ENCODE measurements at regions of chr19 and their contacts with region 1.

Region 1: DNA sequence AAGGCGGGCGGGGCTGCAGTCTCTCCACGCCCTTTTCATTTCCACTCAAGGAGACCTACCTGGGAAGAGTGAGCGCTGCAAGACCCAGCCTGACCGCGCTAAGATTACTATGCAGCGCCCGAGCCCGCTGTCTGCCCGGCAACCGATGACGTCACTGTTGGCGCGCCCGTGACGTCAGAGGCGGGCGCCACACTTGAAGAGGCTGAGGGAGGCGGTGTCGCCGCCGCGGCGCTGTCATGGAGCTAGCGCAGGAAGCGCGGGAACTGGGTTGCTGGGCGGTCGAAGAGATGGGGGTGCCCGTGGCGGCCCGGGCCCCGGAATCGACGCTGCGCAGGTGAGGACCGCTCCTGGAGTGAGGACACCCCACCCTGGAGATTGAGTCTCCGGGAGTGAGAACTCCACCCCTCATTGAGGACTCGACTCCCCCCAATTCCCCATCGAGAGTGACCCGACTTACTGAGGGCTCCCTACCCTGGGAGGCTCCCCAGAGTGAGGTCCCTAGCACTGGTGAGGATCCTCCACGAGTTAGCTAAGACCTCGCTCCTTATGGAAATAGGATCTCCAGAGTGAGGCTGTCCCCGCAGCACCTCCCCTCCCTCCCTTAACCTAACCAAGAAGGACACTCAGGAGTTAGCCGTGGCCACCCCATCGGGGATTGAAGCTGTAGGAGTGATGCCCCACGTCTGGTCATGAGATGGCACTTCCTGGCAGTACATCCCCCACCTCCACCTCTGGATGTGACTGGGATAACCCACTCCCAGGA is at the start of gene HAUS5:
- DNase-seq: peak; percentile 94 to 98
- ATAC-seq: peak; percentile 98
- H3K4me3 ChIP-seq: peak within 1 kb of the TSS; percentile 20 to 66
- H3K27ac ChIP-seq: no peak within 1 kb of the TSS
- H3K4me1 ChIP-seq: no peaks in the 10 kb centered on the region
- H3K27me3 ChIP-seq: no peaks in the 10 kb centered on the region
- total RNA-seq, gene HAUS5: 5.3 to 10.5 TPM

Region 2: DNA sequence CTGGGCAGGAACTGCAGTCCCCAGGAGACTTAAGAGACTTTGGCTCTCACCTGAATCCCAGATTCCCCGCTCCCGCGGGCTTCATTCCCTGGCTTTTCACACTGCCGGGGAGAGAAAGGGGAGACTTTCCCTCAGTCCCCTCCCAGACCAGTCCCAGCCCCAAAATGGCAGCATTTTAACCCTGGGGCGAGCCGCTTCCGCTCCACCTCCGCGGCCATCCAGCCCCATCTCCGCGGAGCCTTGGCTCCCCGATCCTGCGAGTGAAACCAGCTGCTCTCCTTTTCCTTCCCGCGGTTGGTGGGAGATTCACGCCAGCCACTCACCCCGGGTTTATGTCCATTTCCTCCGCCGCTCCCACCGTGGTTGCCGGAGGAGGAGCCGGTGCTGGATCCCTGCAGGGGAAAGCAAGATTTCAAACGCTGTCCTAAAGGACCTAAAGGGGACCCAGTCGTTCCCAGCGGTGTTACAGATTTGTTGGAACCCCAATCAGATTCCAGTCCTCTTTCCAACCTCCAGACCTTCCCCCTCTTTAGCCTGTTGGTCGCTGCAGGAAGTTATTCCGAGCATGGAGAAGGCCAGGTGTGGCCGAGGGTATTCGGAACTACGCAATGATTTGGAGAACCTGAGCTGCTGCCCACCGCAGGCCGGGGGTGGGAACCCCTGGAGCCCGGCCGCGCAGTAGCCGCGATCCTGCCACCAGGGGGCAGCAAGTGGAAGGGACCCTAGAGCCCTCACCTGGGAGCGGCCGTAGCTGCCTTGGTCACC is 102.7 kb before region 1 on chr19:
- intact Hi-C with region 1: loop called in 1 of 2 experiments (anchors 5 kb)
- DNase-seq: peak; percentile 84 to 94
- ATAC-seq: peak; percentile 85
- H3K4me3 ChIP-seq: peak overlapping the region; percentile 32 to 37
- H3K27ac ChIP-seq: peak overlapping the region in 1 of 2 donors; percentile 49
- H3K4me1 ChIP-seq: no peaks in the 10 kb centered on the region
- H3K27me3 ChIP-seq: no peaks in the 10 kb centered on the region

Region 3: DNA sequence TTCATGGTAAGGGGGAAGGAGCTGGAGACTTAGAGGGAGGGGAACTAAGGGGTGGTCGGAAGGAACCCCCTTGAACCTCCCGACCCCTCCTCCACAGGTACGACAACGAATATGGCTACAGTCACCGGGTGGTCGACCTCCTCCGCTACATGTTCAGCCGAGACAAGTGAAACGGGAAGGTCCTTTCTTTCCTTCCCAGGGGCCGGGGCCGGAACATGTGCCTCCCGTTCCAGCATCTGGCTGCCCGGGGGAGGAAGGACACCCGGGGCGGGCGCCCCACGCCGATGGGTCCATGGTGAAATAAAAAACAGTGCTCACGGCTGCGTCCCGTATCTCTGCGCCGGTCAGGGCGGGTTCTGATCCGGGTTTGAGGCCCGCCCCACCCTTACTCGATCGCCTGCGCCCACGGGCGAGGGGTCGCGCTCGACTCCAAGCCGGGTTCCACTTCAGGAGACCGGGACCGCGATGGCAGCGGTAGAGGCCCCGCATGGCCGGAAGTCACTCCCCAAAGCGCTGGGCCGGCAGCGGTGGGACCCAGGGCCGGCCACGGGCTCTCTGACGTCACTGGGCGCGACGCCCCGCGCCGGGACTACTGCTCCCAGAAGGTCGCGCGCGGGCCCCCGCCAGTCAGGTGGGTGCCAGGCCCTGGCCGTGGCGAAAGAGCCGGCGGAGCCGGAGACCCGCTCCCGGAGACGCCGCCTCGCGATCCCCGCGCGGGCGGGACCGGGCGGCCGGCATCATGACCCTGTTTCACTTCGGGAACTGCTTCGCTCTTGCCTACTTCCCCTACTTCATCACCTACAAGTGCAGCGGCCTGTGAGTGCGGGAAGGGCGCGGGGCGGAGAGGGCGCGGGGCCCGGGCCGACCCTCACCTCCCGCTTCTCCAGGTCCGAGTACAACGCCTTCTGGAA is 67.5 kb before region 1 on chr19 and contains the start of gene TMEM147:
- intact Hi-C with region 1: loop called (anchors 5 kb)
- DNase-seq: peak; percentile 96 to 99
- ATAC-seq: peak; percentile 96
- H3K4me3 ChIP-seq: peak within 1 kb of the TSS; percentile 62 to 80
- H3K27ac ChIP-seq: no peak within 1 kb of the TSS
- H3K4me1 ChIP-seq: no peaks in the 10 kb centered on the region
- H3K27me3 ChIP-seq: no peaks in the 10 kb centered on the region
- total RNA-seq, gene TMEM147: 48.0 to 52.2 TPM

Region 4: GRCh38 chr19:35673121-35673804 is 60.5 kb after region 1 on chr19:
- intact Hi-C with region 1: no loop called
- DNase-seq: peak; percentile 62 to 81
- ATAC-seq: no peak
- H3K4me3 ChIP-seq: no peak overlapping the region
- H3K27ac ChIP-seq: no peak overlapping the region
- H3K4me1 ChIP-seq: no peaks in the 10 kb centered on the region
- H3K27me3 ChIP-seq: no peaks in the 10 kb centered on the region

Measured in aorta (tissue), 5 donors.